Activated CD4-positive, alpha-beta T cell treated with anti-CD3 and anti-CD28 coated beads for 36 hours (primary cell): ENCODE measurements at regions of chr2 and their contacts with region 1.

Region 1: DNA sequence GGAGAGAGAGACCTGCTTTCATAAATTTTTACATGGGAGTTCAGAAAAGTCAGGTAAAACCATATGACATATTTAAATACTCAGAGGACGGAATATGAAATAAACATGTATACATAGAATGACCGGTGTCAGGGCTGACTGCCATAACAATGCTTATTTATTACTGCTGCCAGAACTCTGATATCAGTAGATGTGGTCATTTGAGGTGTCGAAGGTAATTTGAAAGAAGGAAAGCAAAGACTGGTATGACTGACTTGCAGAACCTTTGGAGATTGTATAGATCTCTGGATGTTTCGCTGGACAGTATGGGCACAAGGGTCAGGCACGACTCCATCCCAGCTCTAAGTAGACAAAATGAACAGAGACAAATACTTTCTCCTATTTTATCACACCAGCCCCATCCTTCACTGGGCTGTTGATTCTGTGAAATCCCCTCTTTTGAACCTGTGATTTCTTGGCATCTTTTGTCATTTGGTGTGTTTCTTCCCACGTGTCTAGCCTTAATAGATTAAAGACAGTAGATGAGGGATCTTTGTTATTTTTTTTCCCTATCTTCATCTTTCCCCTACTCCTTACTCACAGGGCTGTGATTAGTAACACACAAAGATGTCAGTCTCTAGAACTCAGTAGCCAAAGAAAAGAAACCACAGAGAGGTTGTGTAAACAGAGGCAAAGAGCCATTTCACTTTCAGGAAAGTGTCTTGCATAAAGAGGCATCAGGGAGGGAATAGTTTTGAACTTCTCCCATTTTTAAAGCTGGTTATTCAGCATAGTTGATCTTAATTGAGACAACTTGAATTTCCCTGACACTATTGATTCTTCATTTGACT is 61.6 kb downstream of the ICOS start:
- DNase-seq: no peak
- ATAC-seq: peak; percentile 73
- H3K4me3 Mint-ChIP-seq: peak overlapping the region; percentile 32
- H3K27ac Mint-ChIP-seq: peak overlapping the region; percentile 86
- H3K4me1 Mint-ChIP-seq: peaks cover 67% of the 10 kb centered on the region
- H3K27me3 Mint-ChIP-seq: no peaks in the 10 kb centered on the region

Region 2: GRCh38 chr2:203887677-203888076 is 110.5 kb before region 1 on chr2:
- CTCF ChIA-PET with region 1: no interaction called
- POLR2A ChIA-PET with region 1: no interaction called
- intact Hi-C with region 1: loop called (anchors 5 kb)
- DNase-seq: no peak
- ATAC-seq: no peak
- H3K4me3 Mint-ChIP-seq: no peak overlapping the region
- H3K27ac Mint-ChIP-seq: peak overlapping the region; percentile 68
- H3K4me1 Mint-ChIP-seq: peaks cover 67% of the 10 kb centered on the region
- H3K27me3 Mint-ChIP-seq: peaks cover 4% of the 10 kb centered on the region

Region 3: DNA sequence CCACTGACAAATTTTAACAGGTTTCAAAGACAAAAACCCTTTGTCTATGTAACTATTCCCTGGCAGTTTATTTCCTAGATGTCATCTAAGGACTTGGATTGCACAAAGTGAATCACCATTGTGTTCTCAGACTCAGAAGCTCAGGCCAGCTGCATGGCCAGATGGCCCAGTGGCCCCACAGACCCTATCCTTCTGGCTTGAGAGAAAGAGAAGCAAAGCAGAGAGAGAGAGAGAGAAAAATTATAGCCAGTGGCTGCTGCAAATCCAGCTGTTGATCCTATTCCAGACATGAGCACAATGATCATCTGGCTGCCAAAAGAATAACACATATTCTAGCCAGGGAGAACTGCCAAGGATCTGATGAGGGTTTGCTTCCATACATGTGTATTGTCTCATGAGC is 104.8 kb before region 1 on chr2:
- CTCF ChIA-PET with region 1: no interaction called
- POLR2A ChIA-PET with region 1: no interaction called
- intact Hi-C with region 1: loop called (anchors 5 kb)
- DNase-seq: no peak
- ATAC-seq: no peak
- H3K4me3 Mint-ChIP-seq: peak overlapping the region; percentile 23
- H3K27ac Mint-ChIP-seq: peak overlapping the region; percentile 85
- H3K4me1 Mint-ChIP-seq: peaks cover 78% of the 10 kb centered on the region
- H3K27me3 Mint-ChIP-seq: peaks cover 2% of the 10 kb centered on the region

Region 4: DNA sequence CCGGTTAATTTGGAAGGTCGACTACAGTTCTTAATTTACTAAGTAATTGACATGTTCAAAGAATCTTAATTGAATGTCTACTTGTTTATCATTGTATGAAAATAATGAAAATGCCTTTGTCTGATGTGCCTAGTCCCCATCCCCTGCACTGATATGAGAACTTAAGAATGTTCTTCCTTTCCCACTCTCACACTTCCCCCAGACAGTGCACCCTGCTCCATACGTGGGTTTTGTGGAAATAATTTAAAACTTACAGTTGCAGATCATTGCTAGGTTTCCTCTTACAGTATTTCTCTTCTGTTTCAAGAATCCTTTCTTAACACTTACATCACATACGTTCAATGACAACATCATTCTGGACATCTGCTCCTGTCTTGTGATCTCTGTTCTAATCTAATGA is 58.2 kb before region 1 on chr2:
- CTCF ChIA-PET with region 1: interaction called, 4 read pairs
- POLR2A ChIA-PET with region 1: interaction called, 3 read pairs
- intact Hi-C with region 1: loop called (anchors 2 kb)
- DNase-seq: no peak
- ATAC-seq: peak; percentile 7
- H3K4me3 Mint-ChIP-seq: peak overlapping the region; percentile 87
- H3K27ac Mint-ChIP-seq: peak overlapping the region; percentile 98
- H3K4me1 Mint-ChIP-seq: peaks cover 53% of the 10 kb centered on the region
- H3K27me3 Mint-ChIP-seq: no peaks in the 10 kb centered on the region

Region 5: GRCh38 chr2:204010628-204011560 is 12.7 kb after region 1 on chr2:
- CTCF ChIA-PET with region 1: interaction called, 7 read pairs
- POLR2A ChIA-PET with region 1: interaction called, 4 read pairs
- intact Hi-C with region 1: loop called in 1 of 2 experiments (anchors 1 kb)
- DNase-seq: peak; percentile 31
- ATAC-seq: peak; percentile 42
- H3K4me3 Mint-ChIP-seq: peak overlapping the region; percentile 34
- H3K27ac Mint-ChIP-seq: peak overlapping the region; percentile 72
- H3K4me1 Mint-ChIP-seq: peaks cover 84% of the 10 kb centered on the region
- H3K27me3 Mint-ChIP-seq: no peaks in the 10 kb centered on the region